ENCODE measurements at regions of chr2 and their contacts with region 1.

Region 1: DNA sequence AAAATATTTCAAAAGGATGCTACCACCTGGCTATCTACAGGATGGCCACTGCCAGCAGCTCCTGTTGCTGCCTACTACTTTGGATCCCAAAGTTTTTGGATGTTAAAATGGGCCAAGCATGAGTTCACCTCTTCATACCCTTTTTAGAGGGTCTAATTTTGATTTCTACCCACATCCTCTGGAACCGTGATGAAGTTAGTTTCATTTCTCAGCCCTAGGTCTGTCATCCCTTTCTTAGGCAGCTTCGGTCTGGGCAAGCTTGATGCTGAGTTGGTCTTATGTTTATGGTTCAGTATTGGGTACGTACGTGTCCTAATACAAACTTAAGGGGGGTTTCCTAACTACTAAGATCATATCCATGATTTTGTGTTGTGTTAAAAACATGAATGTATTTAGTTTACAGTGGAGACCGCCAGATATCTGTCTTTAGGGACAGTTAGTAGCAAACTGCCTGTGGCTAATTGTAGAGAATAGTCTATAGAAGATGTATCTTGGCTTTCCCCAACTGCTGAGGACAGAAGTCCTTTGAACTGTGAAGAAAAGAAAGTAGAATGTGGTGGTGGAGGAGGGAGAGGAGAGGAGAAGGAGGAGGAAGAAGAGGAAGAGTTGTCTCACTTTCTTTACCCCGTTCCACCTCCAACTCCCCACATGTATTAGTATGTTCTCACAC is 184.9 kb downstream of the UBE2E3 start:
- DNase-seq: peak in 3 of 5 donors; percentile 53 to 57 (median 57)
- H3K4me3 ChIP-seq: peak overlapping the region in 1 of 2 donors; percentile 42
- H3K4me3 Mint-ChIP-seq: peak overlapping the region in 7 of 8 donors; percentile 45 to 83 (median 78)
- H3K27ac ChIP-seq: peak overlapping the region; percentile 53
- H3K27ac Mint-ChIP-seq: peak overlapping the region; percentile 88 to 98 (median 95)
- H3K4me1 ChIP-seq: peaks cover 50% of the 10 kb centered on the region
- H3K4me1 Mint-ChIP-seq: peaks cover 33 to 66% (median 50%) of the 10 kb centered on the region in 4 donors
- H3K27me3 ChIP-seq: no peaks in the 10 kb centered on the region
- H3K27me3 Mint-ChIP-seq: no peaks in the 10 kb centered on the region

Region 2: DNA sequence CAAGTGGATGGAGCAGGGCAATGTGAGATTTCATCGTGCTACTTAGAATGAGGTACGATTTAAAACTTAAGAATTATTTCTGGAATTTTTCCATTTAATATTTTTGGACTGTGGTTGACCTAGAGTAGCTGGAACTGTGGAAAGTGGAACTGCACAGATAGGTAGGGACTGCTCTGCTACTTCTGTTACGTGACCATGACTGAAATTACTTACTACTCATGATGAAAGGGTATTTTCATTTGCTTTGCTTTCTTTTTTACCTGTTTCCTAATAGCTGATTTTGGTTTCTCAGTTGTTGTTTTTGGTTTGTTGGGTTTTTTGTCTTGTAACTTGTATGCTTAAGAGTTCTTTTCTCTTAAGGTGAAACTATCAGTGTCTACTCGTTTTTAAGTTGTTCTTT is 173.5 kb before region 1 on chr2:
- CTCF ChIA-PET with region 1: no interaction called
- POLR2A ChIA-PET with region 1: no interaction called
- intact Hi-C with region 1: no loop called
- DNase-seq: no peak
- H3K4me3 ChIP-seq: no peak overlapping the region
- H3K4me3 Mint-ChIP-seq: no peak overlapping the region
- H3K27ac ChIP-seq: no peak overlapping the region
- H3K27ac Mint-ChIP-seq: no peak overlapping the region
- H3K4me1 ChIP-seq: no peaks in the 10 kb centered on the region
- H3K4me1 Mint-ChIP-seq: peaks cover 11 to 22% (median 18%) of the 10 kb centered on the region in 4 donors
- H3K27me3 ChIP-seq: no peaks in the 10 kb centered on the region
- H3K27me3 Mint-ChIP-seq: no peaks in the 10 kb centered on the region

Region 3: GRCh38 chr2:181130686-181131085 is 34.6 kb before region 1 on chr2:
- CTCF ChIA-PET with region 1: no interaction called
- POLR2A ChIA-PET with region 1: interaction called, 11 read pairs
- intact Hi-C with region 1: loop called (anchors 2 kb)
- DNase-seq: no peak
- H3K4me3 ChIP-seq: peak overlapping the region in 1 of 2 donors; percentile 1
- H3K4me3 Mint-ChIP-seq: peak overlapping the region in 6 of 8 donors; percentile 73 to 90 (median 78)
- H3K27ac ChIP-seq: peak overlapping the region; percentile 57
- H3K27ac Mint-ChIP-seq: peak overlapping the region in 6 of 7 donors; percentile 78 to 96 (median 94)
- H3K4me1 ChIP-seq: peaks cover 66% of the 10 kb centered on the region
- H3K4me1 Mint-ChIP-seq: peaks cover 29 to 70% (median 38%) of the 10 kb centered on the region in 4 donors
- H3K27me3 ChIP-seq: no peaks in the 10 kb centered on the region
- H3K27me3 Mint-ChIP-seq: no peaks in the 10 kb centered on the region

Region 4: DNA sequence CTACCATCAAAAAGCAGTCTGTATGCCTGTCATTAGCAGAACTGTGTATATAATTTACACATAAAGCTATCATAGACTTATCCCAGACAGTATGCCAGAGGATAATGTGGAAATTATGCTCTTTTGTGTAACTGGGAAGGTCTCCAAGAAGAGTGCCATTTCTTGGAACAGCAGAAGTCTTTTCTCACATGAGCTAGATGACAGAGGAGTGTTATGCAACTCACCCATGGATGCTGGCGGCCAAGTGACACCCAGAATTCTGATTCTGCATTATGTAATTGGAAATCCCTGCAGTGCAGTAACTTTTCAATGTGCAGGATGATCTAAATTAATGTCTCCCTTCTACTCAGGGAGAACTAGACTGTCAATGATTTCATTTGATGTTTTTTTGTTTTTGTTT is 24.9 kb before region 1 on chr2:
- CTCF ChIA-PET with region 1: no interaction called
- POLR2A ChIA-PET with region 1: interaction called, 28 read pairs
- intact Hi-C with region 1: loop called (anchors 1 kb)
- DNase-seq: peak in 1 of 5 donors; percentile 66
- H3K4me3 ChIP-seq: no peak overlapping the region
- H3K4me3 Mint-ChIP-seq: peak overlapping the region in 7 of 8 donors; percentile 61 to 91 (median 82)
- H3K27ac ChIP-seq: peak overlapping the region; percentile 74
- H3K27ac Mint-ChIP-seq: peak overlapping the region; percentile 86 to 99 (median 98)
- H3K4me1 ChIP-seq: peaks cover 72% of the 10 kb centered on the region
- H3K4me1 Mint-ChIP-seq: peaks cover 44 to 78% (median 58%) of the 10 kb centered on the region in 4 donors
- H3K27me3 ChIP-seq: no peaks in the 10 kb centered on the region
- H3K27me3 Mint-ChIP-seq: no peaks in the 10 kb centered on the region

Region 5: GRCh38 chr2:181152226-181152625 is 13.1 kb before region 1 on chr2:
- CTCF ChIA-PET with region 1: interaction called, 3 read pairs
- POLR2A ChIA-PET with region 1: interaction called, 28 read pairs
- intact Hi-C with region 1: loop called (anchors 2 kb)
- DNase-seq: no peak
- H3K4me3 ChIP-seq: no peak overlapping the region
- H3K4me3 Mint-ChIP-seq: peak overlapping the region in 2 of 8 donors; percentile 29 to 80
- H3K27ac ChIP-seq: no peak overlapping the region
- H3K27ac Mint-ChIP-seq: peak overlapping the region in 5 of 7 donors; percentile 19 to 70 (median 51)
- H3K4me1 ChIP-seq: peaks cover 45% of the 10 kb centered on the region
- H3K4me1 Mint-ChIP-seq: peaks cover 19 to 36% (median 31%) of the 10 kb centered on the region in 4 donors
- H3K27me3 ChIP-seq: no peaks in the 10 kb centered on the region
- H3K27me3 Mint-ChIP-seq: no peaks in the 10 kb centered on the region

Region 6: GRCh38 chr2:181178823-181179412 is 13.6 kb after region 1 on chr2:
- CTCF ChIA-PET with region 1: interaction called, 7 read pairs
- POLR2A ChIA-PET with region 1: interaction called, 6 read pairs
- intact Hi-C with region 1: loop called (anchors 2 kb)
- DNase-seq: peak in 4 of 5 donors; percentile 29 to 43 (median 37)
- H3K4me3 ChIP-seq: no peak overlapping the region
- H3K4me3 Mint-ChIP-seq: peak overlapping the region in 4 of 8 donors; percentile 19 to 41 (median 34)
- H3K27ac ChIP-seq: peak overlapping the region; percentile 1
- H3K27ac Mint-ChIP-seq: peak overlapping the region; percentile 12 to 90 (median 54)
- H3K4me1 ChIP-seq: peaks cover 52% of the 10 kb centered on the region
- H3K4me1 Mint-ChIP-seq: peaks cover 31 to 39% (median 36%) of the 10 kb centered on the region in 4 donors
- H3K27me3 ChIP-seq: no peaks in the 10 kb centered on the region
- H3K27me3 Mint-ChIP-seq: no peaks in the 10 kb centered on the region

Region 7: GRCh38 chr2:181223234-181223633 is 57.9 kb after region 1 on chr2:
- CTCF ChIA-PET with region 1: no interaction called
- POLR2A ChIA-PET with region 1: interaction called, 11 read pairs
- intact Hi-C with region 1: no loop called
- DNase-seq: peak in 4 of 5 donors; percentile 35 to 63 (median 48)
- H3K4me3 ChIP-seq: no peak overlapping the region
- H3K4me3 Mint-ChIP-seq: peak overlapping the region in 7 of 8 donors; percentile 53 to 86 (median 65)
- H3K27ac ChIP-seq: peak overlapping the region; percentile 61
- H3K27ac Mint-ChIP-seq: peak overlapping the region; percentile 88 to 99 (median 94)
- H3K4me1 ChIP-seq: peaks cover 37% of the 10 kb centered on the region
- H3K4me1 Mint-ChIP-seq: peaks cover 22 to 40% (median 29%) of the 10 kb centered on the region in 4 donors
- H3K27me3 ChIP-seq: no peaks in the 10 kb centered on the region
- H3K27me3 Mint-ChIP-seq: no peaks in the 10 kb centered on the region